Caco-2 (cell line): ENCODE measurements at regions of chr18 and their contacts with region 1.

Region 1: DNA sequence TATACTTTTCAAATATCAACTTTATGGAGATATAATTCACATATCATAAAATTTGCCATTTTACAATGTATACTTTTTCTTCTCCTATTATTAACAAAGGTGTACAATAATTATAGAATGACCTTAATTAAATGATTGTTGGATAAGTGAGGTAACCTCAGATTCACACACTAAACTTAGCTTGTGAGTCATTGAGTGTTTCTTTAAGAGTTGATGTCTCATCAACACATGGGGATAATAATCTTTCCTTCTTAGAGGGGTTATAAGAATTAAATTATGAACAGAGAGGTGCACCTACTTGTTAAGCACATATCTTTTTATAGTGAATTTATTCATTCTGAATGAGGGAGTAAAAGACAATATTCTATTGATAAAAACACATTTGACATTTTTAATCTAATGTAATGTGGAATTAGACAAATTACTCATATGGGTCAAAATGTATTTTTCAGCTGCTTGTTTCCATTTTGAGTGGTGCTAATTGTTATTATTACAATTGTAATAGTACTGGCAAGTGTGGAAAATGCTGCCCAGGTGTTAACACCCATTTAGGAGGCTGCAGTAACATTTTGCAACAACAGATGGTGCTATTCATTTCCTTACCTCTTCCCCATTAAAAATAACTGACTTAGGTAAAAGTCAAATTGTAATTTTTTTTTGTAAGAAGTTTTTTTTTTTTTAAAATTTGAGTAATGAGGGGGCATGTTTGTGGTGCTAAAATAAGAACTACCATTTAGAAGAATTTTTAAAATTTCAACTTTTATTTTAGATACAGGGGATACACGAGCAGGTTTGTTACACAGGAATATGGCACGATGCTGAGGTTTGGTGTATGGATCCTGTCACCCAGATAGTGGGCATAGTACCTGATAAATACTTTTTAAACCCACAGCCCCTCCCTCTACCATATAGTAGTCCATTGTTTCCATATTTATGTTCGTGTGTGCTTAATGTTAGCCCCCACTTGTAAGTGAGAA is 32.1 kb upstream of the DYNAP start:
- DNase-seq: peak in 1 of 2 experiments; percentile 5
- H3K4me3 ChIP-seq: no peak overlapping the region
- H3K4me3 Mint-ChIP-seq: no peak overlapping the region
- H3K27ac Mint-ChIP-seq: no peak overlapping the region
- H3K4me1 ChIP-seq: no peaks in the 10 kb centered on the region
- H3K4me1 Mint-ChIP-seq: no peaks in the 10 kb centered on the region
- H3K27me3 ChIP-seq: no peaks in the 10 kb centered on the region
- H3K27me3 Mint-ChIP-seq: no peaks in the 10 kb centered on the region
- CTCF ChIP-seq: peak; percentile 33 to 44

Region 2: DNA sequence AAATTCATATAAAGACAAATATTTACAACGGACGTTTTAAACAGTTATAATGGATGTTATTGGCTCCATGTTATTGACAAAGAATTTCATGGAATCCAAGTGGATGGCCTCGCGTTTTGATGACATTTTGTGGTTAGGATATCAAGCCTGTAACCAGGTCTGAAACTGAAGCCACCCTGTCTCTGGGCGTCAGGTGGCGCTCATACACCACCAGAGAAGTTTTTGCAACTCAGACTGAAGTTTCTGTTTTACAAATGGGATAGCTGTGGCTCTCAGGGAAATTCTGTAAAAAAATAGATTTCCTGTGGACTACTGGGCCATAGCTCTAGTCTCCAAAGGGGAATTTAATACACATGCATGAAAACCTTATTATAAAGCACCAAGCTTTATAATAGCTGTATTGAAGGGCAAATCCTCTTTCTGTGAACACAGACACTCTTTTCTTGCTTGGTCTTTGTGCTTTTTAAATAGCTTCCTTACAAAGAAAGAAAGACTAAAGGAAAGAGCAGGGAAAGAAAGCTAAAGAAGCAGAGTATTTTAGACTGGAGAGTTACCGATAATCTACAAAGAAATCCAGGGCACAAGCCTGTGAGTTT is 114.5 kb before region 1 on chr18:
- CTCF ChIA-PET with region 1: no interaction called
- POLR2A ChIA-PET with region 1: no interaction called
- intact Hi-C with region 1: loop called (anchors 1 kb)
- DNase-seq: peak; percentile 50 to 58
- H3K4me3 ChIP-seq: no peak overlapping the region
- H3K4me3 Mint-ChIP-seq: no peak overlapping the region
- H3K27ac Mint-ChIP-seq: no peak overlapping the region
- H3K4me1 ChIP-seq: 0 out of 2 replicates have a peak, but pooled peaks cover 3% of the 10 kb centered on the region
- H3K4me1 Mint-ChIP-seq: no peaks in the 10 kb centered on the region
- H3K27me3 ChIP-seq: no peaks in the 10 kb centered on the region
- H3K27me3 Mint-ChIP-seq: no peaks in the 10 kb centered on the region
- CTCF ChIP-seq: peak; percentile 58 to 68

Region 3: GRCh38 chr18:54647176-54647575 is 88.3 kb after region 1 on chr18:
- CTCF ChIA-PET with region 1: no interaction called
- POLR2A ChIA-PET with region 1: no interaction called
- intact Hi-C with region 1: loop called (anchors 1 kb)
- DNase-seq: peak; percentile 37 to 42
- H3K4me3 ChIP-seq: no peak overlapping the region
- H3K4me3 Mint-ChIP-seq: no peak overlapping the region
- H3K27ac Mint-ChIP-seq: no peak overlapping the region
- H3K4me1 ChIP-seq: no peaks in the 10 kb centered on the region
- H3K4me1 Mint-ChIP-seq: no peaks in the 10 kb centered on the region
- H3K27me3 ChIP-seq: no peaks in the 10 kb centered on the region
- H3K27me3 Mint-ChIP-seq: no peaks in the 10 kb centered on the region
- CTCF ChIP-seq: peak; percentile 53

Region 4: DNA sequence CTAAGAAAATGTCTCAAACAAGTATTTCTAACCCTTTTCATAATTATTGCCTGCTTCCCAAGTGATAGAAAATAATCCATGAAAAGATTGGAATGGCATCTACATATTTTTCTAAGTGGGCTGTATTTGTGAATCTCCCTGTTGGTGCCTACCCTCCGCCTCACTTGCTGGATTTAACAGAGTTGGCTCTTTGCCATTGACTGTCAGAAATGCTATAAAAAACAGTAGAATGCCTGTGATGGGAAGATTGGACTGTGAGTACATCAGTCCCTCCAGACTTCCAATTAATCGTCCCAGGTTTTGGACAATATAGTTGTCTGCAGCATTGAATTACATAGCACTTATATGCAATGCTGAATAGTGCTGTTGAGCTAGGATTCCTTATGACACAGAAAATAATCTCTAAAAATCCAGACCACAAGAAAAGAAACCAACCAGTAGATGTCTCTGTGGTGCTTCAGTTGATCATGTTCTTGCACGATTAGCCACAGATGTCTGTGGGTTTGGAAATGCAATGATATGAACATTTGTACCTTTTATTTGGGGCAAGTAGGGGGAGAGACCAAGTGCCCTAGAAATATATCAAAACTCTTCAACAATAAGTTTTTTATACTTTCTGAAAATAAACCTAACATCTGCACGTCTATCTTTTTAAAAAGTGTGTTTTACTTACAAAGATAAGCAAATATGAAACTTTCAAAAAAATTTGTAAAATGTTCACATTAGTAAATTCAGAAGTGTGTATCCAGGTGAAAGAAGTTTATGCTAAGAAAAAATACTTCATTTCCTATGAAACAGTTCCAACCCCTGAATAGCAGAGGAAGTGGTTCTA is 120.6 kb after region 1 on chr18:
- CTCF ChIA-PET with region 1: no interaction called
- POLR2A ChIA-PET with region 1: no interaction called
- intact Hi-C with region 1: loop called (anchors 10 kb)
- DNase-seq: peak in 1 of 2 experiments; percentile 6
- H3K4me3 ChIP-seq: no peak overlapping the region
- H3K4me3 Mint-ChIP-seq: no peak overlapping the region
- H3K27ac Mint-ChIP-seq: no peak overlapping the region
- H3K4me1 ChIP-seq: no peaks in the 10 kb centered on the region
- H3K4me1 Mint-ChIP-seq: no peaks in the 10 kb centered on the region
- H3K27me3 ChIP-seq: no peaks in the 10 kb centered on the region
- H3K27me3 Mint-ChIP-seq: no peaks in the 10 kb centered on the region
- CTCF ChIP-seq: peak; percentile 20 to 30